Left lung (tissue), 14 donors: ENCODE measurements at regions of chr11 and their contacts with region 1.

Region 1: DNA sequence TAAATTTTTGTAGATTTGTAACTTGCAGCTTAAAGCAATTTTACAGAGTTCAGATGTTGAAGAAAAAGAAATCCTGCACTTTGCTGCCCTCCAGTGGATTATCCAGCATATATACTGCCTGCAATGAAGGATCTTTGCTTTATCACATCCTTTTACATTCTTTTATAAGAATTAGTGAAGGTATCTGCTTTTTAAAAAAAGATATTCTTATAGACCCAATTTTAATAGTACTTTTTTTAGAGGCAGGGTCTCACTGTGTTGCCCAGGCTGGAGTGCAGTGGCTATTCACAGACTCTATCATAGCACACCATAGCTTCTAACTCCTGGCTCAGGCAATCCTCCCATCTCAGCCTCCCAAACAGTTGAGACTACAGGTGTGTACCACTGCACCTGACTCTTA is 60.7 kb downstream of the TTC17 start:
- DNase-seq: peak in 2 of 4 donors; percentile 17 to 47
- ATAC-seq: peak; percentile 80
- H3K4me3 ChIP-seq: no peak overlapping the region
- H3K27ac ChIP-seq: no peak overlapping the region
- H3K4me1 ChIP-seq: no peaks in the 10 kb centered on the region
- H3K27me3 ChIP-seq: no peaks in the 10 kb centered on the region
- CTCF ChIP-seq: peak; percentile 36 to 60

Region 2: GRCh38 chr11:43327987-43328386 is 91.5 kb before region 1 on chr11:
- intact Hi-C with region 1: loop called in 1 of 2 experiments (anchors 10 kb)
- DNase-seq: no peak
- ATAC-seq: peak; percentile 48
- H3K4me3 ChIP-seq: no peak overlapping the region
- H3K27ac ChIP-seq: no peak overlapping the region
- H3K4me1 ChIP-seq: peaks cover 0 to 3% of the 10 kb centered on the region in 2 donors
- H3K27me3 ChIP-seq: no peaks in the 10 kb centered on the region
- CTCF ChIP-seq: no peak

Region 3: GRCh38 chr11:43788421-43788820 is 369.0 kb after region 1 on chr11:
- intact Hi-C with region 1: no loop called
- DNase-seq: peak in 1 of 4 donors; percentile 1
- ATAC-seq: peak; percentile 44
- H3K4me3 ChIP-seq: no peak overlapping the region
- H3K27ac ChIP-seq: peak overlapping the region in 1 of 2 donors; percentile 89
- H3K4me1 ChIP-seq: peaks cover 0 to 7% of the 10 kb centered on the region in 2 donors
- H3K27me3 ChIP-seq: no peaks in the 10 kb centered on the region
- CTCF ChIP-seq: no peak